Left ventricle myocardium inferior (tissue), 1 donor: ENCODE measurements at regions of chr16 and their contacts with region 1.

Region 1: DNA sequence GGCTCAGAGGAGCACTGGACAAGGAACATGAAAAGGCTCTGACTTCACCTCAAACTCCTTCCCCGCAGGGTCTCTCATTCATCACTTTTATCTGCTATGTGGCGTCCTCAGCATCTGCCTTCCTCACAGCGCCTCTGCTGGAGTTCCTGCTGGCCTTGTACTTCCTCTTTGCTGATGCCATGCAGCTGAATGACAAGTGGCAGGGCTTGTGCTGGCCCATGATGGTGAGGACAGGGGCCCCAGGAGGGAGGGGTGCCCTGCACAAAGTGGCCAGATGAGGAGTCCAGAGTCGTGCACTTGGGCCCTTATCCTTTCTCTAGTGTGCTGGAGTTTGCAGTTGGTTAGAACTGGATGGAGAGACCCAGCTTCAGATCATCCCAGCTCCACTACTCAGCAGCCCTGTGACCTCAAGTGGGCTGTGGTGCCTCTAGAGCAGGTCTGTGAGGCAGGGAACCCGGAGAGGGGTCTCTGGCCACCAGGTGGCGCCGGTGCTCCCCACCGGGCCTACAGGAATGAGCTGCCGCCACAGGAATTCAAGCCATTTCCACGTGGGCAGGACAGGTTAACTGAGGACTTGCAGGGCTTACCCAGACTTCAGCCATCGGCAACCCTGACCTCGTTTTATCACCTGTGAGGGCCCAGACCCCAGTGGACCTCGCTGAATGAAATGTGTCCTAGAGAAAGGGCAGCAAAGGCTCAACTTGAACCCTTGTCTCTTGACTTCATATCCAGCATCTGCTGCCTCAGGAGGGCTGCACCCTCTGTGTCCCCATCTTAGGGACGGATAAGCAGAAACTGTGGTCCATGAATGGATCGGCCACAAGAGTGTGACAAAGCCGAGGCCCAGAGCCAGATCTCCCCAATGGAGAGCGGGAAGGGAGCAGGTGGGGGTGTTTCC is 4.0 kb downstream of the CMTM3 start:
- DNase-seq: peak; percentile 87
- H3K4me3 ChIP-seq: no peak overlapping the region
- H3K27ac ChIP-seq: peak overlapping the region; percentile 44
- H3K4me1 ChIP-seq: peaks cover 49% of the 10 kb centered on the region
- H3K27me3 ChIP-seq: no peaks in the 10 kb centered on the region
- CTCF ChIP-seq: peak; percentile 94

Region 2: GRCh38 chr16:66552286-66553177 is 56.0 kb before region 1 on chr16 and contains the start of gene CKLF:
- intact Hi-C with region 1: loop called (anchors 10 kb)
- DNase-seq: peak; percentile 91
- H3K4me3 ChIP-seq: peak within 1 kb of the TSS; percentile 77
- H3K27ac ChIP-seq: peak within 1 kb of the TSS; percentile 99
- H3K4me1 ChIP-seq: peaks cover 70% of the 10 kb centered on the region
- H3K27me3 ChIP-seq: no peaks in the 10 kb centered on the region
- CTCF ChIP-seq: no peak
- total RNA-seq, gene CKLF: 7.8 TPM